Tibial artery (tissue), 4 donors: ENCODE measurements at regions of chr11 and their contacts with region 1.

Region 1: DNA sequence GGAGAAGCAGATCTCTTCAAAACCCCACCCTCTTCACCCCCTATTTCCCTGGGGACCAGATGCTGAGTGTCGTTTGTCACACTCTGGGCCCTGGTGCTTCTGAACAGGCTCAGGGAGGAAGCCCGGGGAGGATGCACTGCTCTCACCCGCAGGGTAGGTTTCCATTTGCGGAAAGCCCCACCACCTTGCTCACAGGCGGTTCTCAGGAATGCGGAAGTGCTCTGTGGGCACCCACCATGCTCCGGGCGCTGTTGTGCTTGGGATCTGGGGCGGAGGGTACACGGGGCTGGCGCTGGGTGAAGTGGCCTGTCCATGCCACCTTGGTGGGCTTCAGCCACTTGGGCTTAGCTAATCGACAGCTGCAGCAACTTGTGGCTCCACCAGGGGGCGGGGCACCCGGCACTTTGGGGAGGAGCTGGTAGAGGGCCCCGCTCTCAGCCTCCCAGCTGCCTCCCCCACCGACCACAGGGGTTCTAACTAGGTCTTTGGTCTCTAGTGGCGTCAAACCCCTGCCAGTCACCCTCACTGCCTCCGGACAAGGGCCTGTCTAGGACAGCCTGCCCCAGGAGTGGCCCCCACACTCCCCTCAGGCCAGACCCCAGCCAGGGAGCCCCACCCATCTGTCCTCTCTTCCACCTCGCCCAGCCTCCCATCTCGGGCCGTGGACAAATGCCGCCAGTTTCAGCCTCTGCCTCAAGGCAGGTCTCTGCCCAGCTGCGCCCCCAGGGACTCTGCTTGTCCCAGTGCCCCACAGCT is 7.4 kb downstream of the NDUFV1 start:
- DNase-seq: peak in 1 of 2 donors; percentile 49
- H3K4me3 ChIP-seq: peak overlapping the region; percentile 42 to 52
- H3K27ac ChIP-seq: peak overlapping the region; percentile 45 to 54
- H3K4me1 ChIP-seq: peaks cover 0 to 20% (median 11%) of the 10 kb centered on the region in 4 donors
- H3K27me3 ChIP-seq: peaks cover 0 to 23% of the 10 kb centered on the region in 2 donors
- CTCF ChIP-seq: peak; percentile 57 to 62

Region 2: GRCh38 chr11:67507864-67508485 is 106.2 kb before region 1 on chr11 and contains the start of gene CDK2AP2:
- intact Hi-C with region 1: no loop called
- DNase-seq: peak; percentile 99 to 100
- H3K4me3 ChIP-seq: peak within 1 kb of the TSS; percentile 76 to 80
- H3K27ac ChIP-seq: peak within 1 kb of the TSS; percentile 92 to 99
- H3K4me1 ChIP-seq: peaks cover 0 to 49% (median 43%) of the 10 kb centered on the region in 4 donors
- H3K27me3 ChIP-seq: peaks cover 0 to 5% of the 10 kb centered on the region in 2 donors
- CTCF ChIP-seq: peak in 1 of 2 experiments; percentile 29

Region 3: DNA sequence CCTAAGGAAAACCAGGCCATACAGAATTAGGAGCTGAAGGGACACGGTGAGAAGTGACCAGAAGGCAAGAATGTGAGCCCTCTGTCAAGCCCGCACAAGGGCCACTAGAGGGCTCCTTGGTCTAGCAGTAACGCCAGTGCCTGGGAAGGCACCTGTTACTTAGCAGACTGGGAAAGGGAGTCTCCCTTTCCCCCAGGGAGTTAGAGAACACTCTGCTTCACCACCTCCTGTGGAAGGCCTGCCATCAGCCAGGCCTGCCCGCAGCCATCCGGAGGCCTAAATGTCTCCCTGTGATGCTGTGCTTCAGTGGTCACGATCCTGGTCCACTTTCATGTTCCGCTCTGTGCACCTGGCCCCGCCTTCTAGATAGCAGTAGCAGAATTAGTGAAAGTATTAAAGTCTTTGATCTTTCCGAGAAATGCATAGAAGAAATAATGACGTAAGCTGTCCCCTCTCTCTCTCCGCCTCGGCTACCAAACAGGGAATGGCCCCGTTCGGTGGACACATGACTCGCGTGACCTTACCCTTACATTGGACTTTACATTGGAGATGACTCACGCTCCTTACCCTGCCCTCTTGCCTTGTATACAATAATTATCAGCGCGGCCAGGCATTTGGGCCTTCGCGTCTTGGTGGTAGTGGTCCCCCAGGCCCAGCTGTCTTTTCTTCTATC is 41.3 kb before region 1 on chr11:
- intact Hi-C with region 1: loop called (anchors 5 kb)
- DNase-seq: peak in 1 of 2 donors; percentile 41
- H3K4me3 ChIP-seq: no peak overlapping the region
- H3K27ac ChIP-seq: no peak overlapping the region
- H3K4me1 ChIP-seq: no peaks in the 10 kb centered on the region
- H3K27me3 ChIP-seq: peaks cover 0 to 39% of the 10 kb centered on the region in 2 donors
- CTCF ChIP-seq: peak; percentile 63 to 72